ENCODE measurements at regions of chr17 and their contacts with region 1.

Region 1: DNA sequence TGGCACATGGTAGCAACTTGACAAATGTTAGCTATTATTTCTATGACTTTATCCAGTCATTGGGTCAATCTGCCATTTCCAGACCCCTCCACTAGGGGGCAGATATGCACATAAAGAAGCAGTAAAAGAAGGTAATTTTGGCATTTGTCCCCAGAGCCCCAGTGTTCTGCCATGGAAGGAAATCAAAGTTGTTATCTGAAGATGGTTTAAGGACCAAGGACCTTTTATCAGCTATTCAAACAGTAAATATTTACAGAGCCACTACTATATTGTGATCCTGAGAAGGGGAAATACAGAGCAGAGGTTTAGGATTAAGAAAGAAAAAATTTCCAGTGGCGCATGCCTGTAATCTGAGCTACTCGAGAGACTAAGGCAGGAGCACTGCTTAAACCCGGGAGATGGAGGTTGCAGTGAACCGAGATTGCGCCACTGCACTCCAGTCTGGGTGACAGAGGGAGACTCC is 20.0 kb downstream of the TRAF4 start:
- DNase-seq: peak; percentile 93
- ATAC-seq: peak; percentile 88
- H3K4me3 Mint-ChIP-seq: no peak overlapping the region
- H3K27ac Mint-ChIP-seq: no peak overlapping the region
- H3K4me1 Mint-ChIP-seq: peaks cover 16% of the 10 kb centered on the region
- H3K27me3 Mint-ChIP-seq: no peaks in the 10 kb centered on the region
- CTCF ChIP-seq: peak; percentile 97

Region 2: GRCh38 chr17:28750178-28751047 is 13.4 kb before region 1 on chr17:
- CTCF ChIA-PET with region 1: interaction called, 109 read pairs
- POLR2A ChIA-PET with region 1: interaction called, 31 read pairs
- intact Hi-C with region 1: no loop called
- DNase-seq: peak; percentile 98
- ATAC-seq: peak; percentile 93
- H3K4me3 Mint-ChIP-seq: no peak overlapping the region
- H3K27ac Mint-ChIP-seq: peak overlapping the region; percentile 38
- H3K4me1 Mint-ChIP-seq: peaks cover 46% of the 10 kb centered on the region
- H3K27me3 Mint-ChIP-seq: no peaks in the 10 kb centered on the region
- CTCF ChIP-seq: peak; percentile 100

Region 3: DNA sequence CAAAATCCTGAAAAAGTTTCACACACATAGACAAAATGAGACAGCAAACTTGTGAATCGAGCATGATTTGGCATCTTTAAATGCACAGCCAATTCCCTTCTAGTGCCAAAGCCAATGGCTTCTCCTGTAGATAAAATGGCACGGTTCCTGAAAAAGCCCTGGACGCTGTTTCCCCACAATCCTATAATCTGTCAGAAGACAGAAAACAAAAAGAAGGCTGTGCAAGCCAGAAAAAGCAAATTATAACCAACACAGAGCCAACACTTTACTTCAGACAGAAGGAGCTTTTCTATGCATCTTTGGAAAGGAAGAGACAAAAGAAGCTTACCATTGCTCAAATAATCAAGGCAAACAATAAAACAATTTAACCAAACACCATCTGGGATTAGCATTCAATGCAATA is 55.0 kb after region 1 on chr17:
- CTCF ChIA-PET with region 1: interaction called, 22 read pairs
- POLR2A ChIA-PET with region 1: no interaction called
- intact Hi-C with region 1: no loop called
- DNase-seq: no peak
- ATAC-seq: no peak
- H3K4me3 Mint-ChIP-seq: no peak overlapping the region
- H3K27ac Mint-ChIP-seq: no peak overlapping the region
- H3K4me1 Mint-ChIP-seq: peaks cover 10% of the 10 kb centered on the region
- H3K27me3 Mint-ChIP-seq: no peaks in the 10 kb centered on the region
- CTCF ChIP-seq: no peak

Region 4: DNA sequence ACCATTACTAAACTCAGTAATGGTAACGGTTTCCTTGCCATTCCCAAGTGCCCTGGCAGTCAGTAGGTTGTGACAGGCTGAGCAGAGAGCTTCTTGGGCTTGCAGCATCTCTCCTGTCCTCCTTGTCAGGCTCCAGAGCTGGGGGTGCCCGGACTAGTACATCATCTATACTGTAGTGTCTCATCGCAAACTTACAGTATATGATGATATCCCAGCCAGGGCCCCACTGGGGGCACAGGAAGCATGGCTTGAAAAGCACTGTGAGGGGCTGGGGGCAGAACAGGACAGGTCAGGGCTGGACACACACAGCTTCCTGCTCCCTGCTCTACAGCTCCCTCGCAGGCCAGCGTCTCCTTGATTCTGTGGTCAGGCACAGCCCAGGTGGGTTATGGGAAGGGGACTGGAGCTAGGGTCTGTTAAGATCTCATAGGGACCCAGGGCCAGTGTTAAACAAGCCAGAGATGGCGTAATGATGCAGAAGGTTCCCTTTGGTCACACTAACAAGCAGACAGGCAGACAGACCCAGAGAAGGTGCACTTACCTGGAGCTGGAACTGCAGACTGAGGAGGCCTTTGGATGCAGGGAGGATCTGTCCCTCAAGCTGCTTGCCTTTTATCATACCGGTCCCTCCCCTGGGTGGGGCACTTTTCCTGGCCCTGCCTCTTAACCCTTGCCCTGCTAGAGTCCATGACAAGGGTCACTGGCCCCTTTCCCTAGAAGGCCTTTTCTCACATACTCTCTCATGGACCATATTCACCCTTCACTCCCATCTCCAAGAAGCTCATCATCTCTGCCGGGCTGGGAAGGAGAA is 97.8 kb after region 1 on chr17:
- CTCF ChIA-PET with region 1: interaction called, 12 read pairs
- POLR2A ChIA-PET with region 1: no interaction called
- intact Hi-C with region 1: no loop called
- DNase-seq: no peak
- ATAC-seq: no peak
- H3K4me3 Mint-ChIP-seq: no peak overlapping the region
- H3K27ac Mint-ChIP-seq: no peak overlapping the region
- H3K4me1 Mint-ChIP-seq: peaks cover 15% of the 10 kb centered on the region
- H3K27me3 Mint-ChIP-seq: no peaks in the 10 kb centered on the region
- CTCF ChIP-seq: no peak

Region 5: GRCh38 chr17:28902819-28903545 is 139.1 kb after region 1 on chr17 and contains the start of gene DHRS13:
- CTCF ChIA-PET with region 1: interaction called, 32 read pairs
- POLR2A ChIA-PET with region 1: interaction called, 12 read pairs
- intact Hi-C with region 1: no loop called
- DNase-seq: peak; percentile 93
- ATAC-seq: peak; percentile 95
- H3K4me3 Mint-ChIP-seq: peak within 1 kb of the TSS; percentile 88
- H3K27ac Mint-ChIP-seq: peak within 1 kb of the TSS; percentile 86
- H3K4me1 Mint-ChIP-seq: peaks cover 31% of the 10 kb centered on the region
- H3K27me3 Mint-ChIP-seq: no peaks in the 10 kb centered on the region
- CTCF ChIP-seq: peak; percentile 100
- total RNA-seq, gene DHRS13: 37.3 to 38.2 TPM

Region 6: GRCh38 chr17:28937044-28937729 is 173.4 kb after region 1 on chr17:
- CTCF ChIA-PET with region 1: interaction called, 12 read pairs
- POLR2A ChIA-PET with region 1: no interaction called
- intact Hi-C with region 1: no loop called
- DNase-seq: no peak
- ATAC-seq: no peak
- H3K4me3 Mint-ChIP-seq: no peak overlapping the region
- H3K27ac Mint-ChIP-seq: no peak overlapping the region
- H3K4me1 Mint-ChIP-seq: peaks cover 74% of the 10 kb centered on the region
- H3K27me3 Mint-ChIP-seq: no peaks in the 10 kb centered on the region
- CTCF ChIP-seq: no peak

Measured in activated CD8-positive, alpha-beta T cell treated with anti-CD3 and anti-CD28 coated beads for 36 hours (primary cell).